Activated CD4-positive, alpha-beta T cell treated with anti-CD3 and anti-CD28 coated beads, Interleukin-2, amount 10 ng/mL, durations not matched to agents 24 days and 14 days (primary cell): ENCODE measurements at regions of chr9 and their contacts with region 1.

Region 1: DNA sequence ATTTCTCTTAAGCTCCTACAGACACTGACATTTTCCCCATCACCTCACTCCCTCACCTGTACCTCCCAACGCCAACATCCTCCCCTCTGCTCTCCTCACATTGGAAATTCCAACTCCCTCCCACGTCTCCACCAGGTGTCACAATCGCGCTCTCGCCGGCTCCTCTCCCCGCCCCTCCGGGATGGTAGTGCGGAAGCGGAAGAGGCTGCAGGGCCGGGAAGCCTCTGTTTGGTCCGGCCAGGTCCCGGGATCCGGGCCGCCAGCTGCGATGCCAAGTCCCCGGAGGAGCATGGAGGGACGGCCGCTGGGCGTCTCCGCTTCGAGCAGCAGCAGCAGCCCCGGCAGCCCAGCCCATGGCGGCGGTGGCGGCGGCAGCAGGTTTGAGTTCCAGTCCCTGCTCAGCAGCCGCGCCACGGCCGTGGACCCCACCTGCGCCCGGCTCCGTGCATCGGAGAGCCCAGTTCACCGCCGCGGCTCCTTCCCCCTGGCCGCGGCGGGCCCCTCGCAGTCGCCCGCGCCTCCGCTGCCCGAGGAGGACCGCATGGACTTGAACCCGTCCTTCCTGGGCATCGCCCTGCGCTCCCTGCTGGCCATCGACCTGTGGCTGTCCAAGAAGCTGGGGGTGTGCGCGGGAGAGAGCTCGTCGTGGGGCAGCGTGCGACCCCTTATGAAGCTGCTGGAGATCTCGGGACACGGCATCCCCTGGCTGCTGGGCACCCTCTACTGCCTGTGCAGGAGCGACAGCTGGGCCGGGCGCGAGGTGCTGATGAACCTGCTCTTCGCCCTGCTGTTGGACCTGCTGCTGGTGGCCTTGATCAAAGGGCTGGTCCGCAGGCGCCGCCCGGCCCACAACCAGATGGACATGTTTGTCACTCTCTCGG is at the start of gene PLPP6:
- DNase-seq: peak; percentile 94
- H3K4me3 Mint-ChIP-seq: peak within 1 kb of the TSS; percentile 87
- H3K27ac Mint-ChIP-seq: peak within 1 kb of the TSS; percentile 79
- H3K4me1 Mint-ChIP-seq: peaks cover 43% of the 10 kb centered on the region
- H3K27me3 Mint-ChIP-seq: peaks cover 10% of the 10 kb centered on the region
- total RNA-seq, gene PLPP6: 5.5 and 6.0 TPM in 2 replicates

Region 2: DNA sequence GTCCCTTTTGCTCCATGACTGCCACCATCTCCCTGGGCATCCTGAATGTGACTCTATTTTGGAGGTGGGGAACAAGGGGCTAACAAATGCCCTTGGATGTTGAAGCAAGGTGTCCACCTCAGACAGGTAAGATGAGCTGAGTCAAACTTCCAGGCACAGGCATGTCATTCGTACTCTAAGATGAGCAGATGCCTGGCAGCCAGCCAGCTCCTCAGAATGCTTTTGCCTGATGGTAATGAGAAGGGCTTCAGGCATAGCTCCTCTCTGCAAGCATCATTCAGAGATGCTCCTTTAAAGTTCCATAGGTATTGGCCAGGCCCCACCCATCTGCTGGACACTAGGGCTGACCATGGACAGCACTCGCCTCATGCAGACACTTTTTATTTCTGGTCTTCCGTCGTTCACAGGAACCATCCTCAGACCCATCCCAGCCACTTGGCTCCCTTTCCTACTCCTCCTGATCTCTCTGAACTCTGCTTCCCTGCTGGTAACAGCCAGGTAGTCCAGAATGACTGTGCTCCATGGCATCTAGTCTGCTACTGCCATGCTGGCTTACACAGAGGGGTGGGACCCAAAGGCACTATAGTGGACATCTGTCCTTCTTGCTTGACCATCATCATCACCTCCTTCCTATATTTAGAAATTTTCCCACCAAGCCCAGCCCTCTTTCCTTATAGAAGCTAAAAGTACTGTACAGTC is 481.3 kb before region 1 on chr9:
- intact Hi-C with region 1: no loop called
- DNase-seq: no peak
- H3K4me3 Mint-ChIP-seq: no peak overlapping the region
- H3K27ac Mint-ChIP-seq: no peak overlapping the region
- H3K4me1 Mint-ChIP-seq: no peaks in the 10 kb centered on the region
- H3K27me3 Mint-ChIP-seq: no peaks in the 10 kb centered on the region

Region 3: GRCh38 chr9:4604678-4605095 is 57.7 kb before region 1 on chr9:
- intact Hi-C with region 1: loop called (anchors 5 kb)
- DNase-seq: peak; percentile 91
- H3K4me3 Mint-ChIP-seq: no peak overlapping the region
- H3K27ac Mint-ChIP-seq: no peak overlapping the region
- H3K4me1 Mint-ChIP-seq: peaks cover 14% of the 10 kb centered on the region
- H3K27me3 Mint-ChIP-seq: peaks cover 1% of the 10 kb centered on the region

Region 4: DNA sequence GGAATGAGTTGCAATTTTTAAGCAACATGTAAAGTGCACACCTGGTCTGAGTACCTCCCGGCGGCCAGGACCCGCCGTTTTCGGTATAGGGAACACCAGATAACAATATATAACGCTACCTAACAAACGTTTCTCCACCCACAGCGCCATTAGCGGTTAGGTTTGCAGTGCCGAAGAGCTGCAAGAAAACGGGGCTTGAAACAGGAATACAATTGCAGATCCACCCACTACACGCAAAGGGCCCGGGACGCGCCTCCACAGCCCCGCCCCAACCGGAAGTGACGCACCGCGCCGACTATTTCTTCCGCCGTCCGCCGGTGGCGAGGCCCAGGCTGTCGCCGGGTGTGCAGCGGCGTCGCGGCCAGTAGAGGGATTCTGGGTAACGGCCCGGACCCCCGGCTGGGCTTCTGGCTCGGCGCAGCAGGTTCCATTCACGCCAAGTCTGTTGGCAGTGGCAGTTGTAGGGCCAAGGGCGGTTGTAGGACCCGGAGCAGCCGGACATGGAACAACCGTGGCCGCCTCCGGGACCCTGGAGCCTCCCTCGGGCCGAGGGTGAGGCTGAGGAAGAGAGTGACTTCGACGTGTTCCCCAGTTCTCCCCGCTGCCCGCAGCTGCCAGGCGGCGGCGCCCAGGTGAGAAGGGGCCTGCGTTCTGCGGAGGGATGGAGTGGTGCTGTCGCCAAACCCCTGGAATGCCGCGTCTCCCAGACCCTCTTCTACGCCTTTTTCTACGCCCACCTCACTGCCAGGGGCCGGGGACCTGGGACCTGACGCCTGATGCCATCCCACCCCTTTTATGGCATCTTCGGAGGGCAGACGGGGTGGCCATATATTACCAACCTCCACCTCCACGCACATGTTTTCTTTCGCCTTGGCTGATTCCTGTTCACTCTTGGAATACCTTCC is 17.2 kb after region 1 on chr9 and contains the start of gene CDC37L1:
- intact Hi-C with region 1: loop called (anchors 1 kb)
- DNase-seq: peak; percentile 100
- H3K4me3 Mint-ChIP-seq: no peak within 1 kb of the TSS
- H3K27ac Mint-ChIP-seq: no peak within 1 kb of the TSS
- H3K4me1 Mint-ChIP-seq: peaks cover 7% of the 10 kb centered on the region
- H3K27me3 Mint-ChIP-seq: no peaks in the 10 kb centered on the region
- total RNA-seq, gene CDC37L1: 11.3 and 12.1 TPM in 2 replicates

Region 5: GRCh38 chr9:4706971-4707622 is 44.7 kb after region 1 on chr9:
- intact Hi-C with region 1: no loop called
- DNase-seq: peak; percentile 45
- H3K4me3 Mint-ChIP-seq: no peak overlapping the region
- H3K27ac Mint-ChIP-seq: no peak overlapping the region
- H3K4me1 Mint-ChIP-seq: peaks cover 6% of the 10 kb centered on the region
- H3K27me3 Mint-ChIP-seq: no peaks in the 10 kb centered on the region

Region 6: DNA sequence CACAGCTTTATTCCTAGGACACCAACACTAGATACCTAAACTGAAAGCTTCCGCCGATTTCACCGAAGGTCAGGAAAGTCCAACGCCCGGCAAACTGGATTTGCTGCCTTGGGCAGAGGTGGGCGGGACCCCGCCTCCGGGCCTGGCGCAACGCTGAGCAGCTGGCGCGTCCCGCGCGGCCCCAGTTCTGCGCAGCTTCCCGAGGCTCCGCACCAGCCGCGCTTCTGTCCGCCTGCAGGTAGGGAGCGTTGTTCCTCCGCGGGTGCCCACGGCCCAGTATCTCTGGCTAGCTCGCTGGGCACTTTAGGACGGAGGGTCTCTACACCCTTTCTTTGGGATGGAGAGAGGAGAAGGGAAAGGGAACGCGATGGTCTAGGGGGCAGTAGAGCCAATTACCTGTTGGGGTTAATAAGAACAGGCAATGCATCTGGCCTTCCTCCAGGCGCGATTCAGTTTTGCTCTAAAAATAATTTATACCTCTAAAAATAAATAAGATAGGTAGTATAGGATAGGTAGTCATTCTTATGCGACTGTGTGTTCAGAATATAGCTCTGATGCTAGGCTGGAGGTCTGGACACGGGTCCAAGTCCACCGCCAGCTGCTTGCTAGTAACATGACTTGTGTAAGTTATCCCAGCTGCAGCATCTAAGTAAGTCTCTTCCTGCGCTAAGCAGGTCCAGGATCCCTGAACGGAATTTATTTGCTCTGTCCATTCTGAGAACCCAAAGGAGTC is 788.2 kb after region 1 on chr9 and contains the start of gene CD274:
- intact Hi-C with region 1: loop called (anchors 10 kb)
- DNase-seq: peak; percentile 95
- H3K4me3 Mint-ChIP-seq: peak within 1 kb of the TSS; percentile 90
- H3K27ac Mint-ChIP-seq: peak within 1 kb of the TSS; percentile 90
- H3K4me1 Mint-ChIP-seq: peaks cover 56% of the 10 kb centered on the region
- H3K27me3 Mint-ChIP-seq: no peaks in the 10 kb centered on the region
- total RNA-seq, gene CD274: 52.1 and 57.6 TPM in 2 replicates